Head of caudate nucleus (tissue), 42 donors: ENCODE measurements at regions of chr5 and their contacts with region 1.

Region 1: DNA sequence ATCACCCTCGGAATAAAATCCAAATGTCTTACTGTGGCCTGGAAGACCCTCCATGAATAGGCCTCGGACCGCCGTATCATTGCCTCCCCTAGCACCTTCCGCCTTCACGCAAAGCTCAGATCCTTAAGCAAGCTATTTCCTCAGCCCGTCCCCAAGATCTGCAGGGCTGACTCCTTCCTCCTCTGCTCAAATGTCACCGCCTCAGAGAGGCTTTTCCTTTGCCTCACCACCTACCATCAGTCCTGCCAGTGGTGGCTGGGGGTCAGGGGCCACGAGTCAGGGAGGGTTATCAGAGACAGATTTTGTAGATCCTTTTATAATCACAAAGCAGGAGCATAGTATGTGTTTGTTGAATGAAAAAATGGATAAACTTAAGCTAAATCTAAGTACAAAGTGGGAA is 74.4 kb upstream of the KIF2A start:
- DNase-seq: no peak

Region 2: DNA sequence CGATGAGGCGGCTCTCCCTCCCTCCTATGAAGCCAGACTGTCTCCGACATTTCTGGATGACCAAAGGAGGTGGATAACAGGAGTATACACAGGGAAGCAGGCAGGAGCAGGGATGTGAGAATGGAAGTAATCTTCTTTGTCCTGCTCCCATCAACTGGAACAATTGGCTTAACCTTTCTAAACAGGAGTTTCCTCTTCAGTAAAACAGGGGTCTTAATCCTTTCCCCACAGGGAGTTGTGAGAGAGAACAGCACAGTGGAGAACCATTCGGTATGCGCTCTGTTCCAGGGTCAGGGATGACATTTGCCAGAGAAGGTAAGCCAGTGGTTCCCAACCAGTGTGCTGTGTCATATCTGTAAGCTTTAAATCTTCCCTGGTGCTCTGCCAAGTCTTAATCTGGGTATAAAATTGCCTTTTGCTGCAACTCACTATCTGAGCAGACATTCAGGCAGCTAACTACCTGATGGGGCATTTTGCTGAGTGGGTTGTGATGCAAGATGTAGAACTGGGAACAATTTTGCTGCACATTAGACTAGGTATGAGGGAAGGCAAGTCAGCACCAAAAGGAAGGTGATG is 220.4 kb before region 1 on chr5:
- intact Hi-C with region 1: no loop called
- DNase-seq: peak in 1 of 42 donors; percentile 9

Region 3: GRCh38 chr5:62354028-62354874 is 122.7 kb after region 1 on chr5:
- intact Hi-C with region 1: loop called (anchors 10 kb)
- DNase-seq: peak in 8 of 42 donors; percentile 38 to 75 (median 56)